Endothelial cell of umbilical vein (primary cell): ENCODE measurements at regions of chr4 and their contacts with region 1.

Region 1: DNA sequence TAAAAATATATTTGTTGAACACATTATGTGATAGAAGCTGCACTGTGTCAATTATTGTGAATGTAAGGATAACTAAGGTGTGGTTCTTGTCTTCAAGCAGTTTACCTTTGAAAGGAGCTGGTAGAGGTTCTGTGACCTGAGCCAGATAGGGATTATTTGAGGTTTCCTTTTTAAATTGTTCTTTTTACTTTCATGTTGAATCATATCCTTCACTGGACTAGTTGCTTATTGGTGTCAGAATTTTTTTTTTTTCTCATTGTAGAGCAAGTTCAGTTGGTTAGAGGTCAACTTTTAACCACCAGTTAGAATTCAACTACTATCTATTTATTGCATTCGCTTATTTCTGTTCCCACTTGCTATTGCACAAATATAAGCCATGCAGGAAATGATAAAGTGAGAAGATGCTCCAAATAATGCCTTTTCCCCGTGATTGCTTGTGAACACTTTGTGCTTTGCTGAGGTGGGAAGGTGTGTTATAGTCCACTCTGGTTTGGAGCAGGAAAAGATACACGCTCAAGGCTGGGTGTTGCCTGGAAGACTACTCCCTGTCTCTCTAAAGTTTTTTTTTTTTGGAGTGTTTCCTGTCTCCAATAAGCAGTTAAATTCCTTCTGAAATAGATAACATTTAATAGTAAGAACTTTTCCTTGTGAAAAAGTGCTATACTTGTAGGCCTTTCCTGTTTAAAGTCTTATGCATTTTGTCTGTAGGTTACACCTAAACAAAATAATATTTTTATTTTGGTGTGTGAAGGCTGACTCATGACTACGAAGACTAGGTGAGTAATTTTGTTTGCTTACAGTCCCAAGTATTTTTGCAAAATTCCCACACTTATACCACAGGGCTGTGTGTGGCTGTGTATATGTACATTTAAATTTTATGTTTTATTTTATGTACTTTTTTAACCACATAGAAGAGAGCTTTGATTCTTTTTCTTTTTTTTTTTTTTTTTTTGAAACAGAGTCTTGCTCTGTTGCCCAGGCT is 83.8 kb upstream of the LCORL start:
- DNase-seq: peak; percentile 57
- H3K4me3 ChIP-seq: no peak overlapping the region
- H3K27ac ChIP-seq: peak overlapping the region; percentile 46
- H3K4me1 ChIP-seq: peaks cover 36% of the 10 kb centered on the region
- H3K27me3 ChIP-seq: no peaks in the 10 kb centered on the region
- CTCF ChIP-seq: no peak
- POLR2A ChIP-seq: no peak

Region 2: GRCh38 chr4:18075823-18076433 is 29.4 kb before region 1 on chr4:
- CTCF ChIA-PET with region 1: interaction called, 5 read pairs
- POLR2A ChIA-PET with region 1: no interaction called
- dilution Hi-C with region 1: no loop called
- intact Hi-C with region 1: loop called (anchors 1 kb)
- DNase-seq: peak; percentile 47
- H3K4me3 ChIP-seq: no peak overlapping the region
- H3K27ac ChIP-seq: no peak overlapping the region
- H3K4me1 ChIP-seq: peaks cover 13% of the 10 kb centered on the region
- H3K27me3 ChIP-seq: peaks cover 4 to 8% of the 10 kb centered on the region in 2 experiments
- CTCF ChIP-seq: peak; percentile 60 to 62
- POLR2A ChIP-seq: no peak

Region 3: GRCh38 chr4:18318682-18319388 is 213.5 kb after region 1 on chr4:
- CTCF ChIA-PET with region 1: no interaction called
- POLR2A ChIA-PET with region 1: no interaction called
- dilution Hi-C with region 1: no loop called
- intact Hi-C with region 1: loop called (anchors 5 kb)
- DNase-seq: peak; percentile 91
- H3K4me3 ChIP-seq: peak overlapping the region in 2 of 3 experiments; percentile 2 to 25
- H3K27ac ChIP-seq: peak overlapping the region; percentile 16
- H3K4me1 ChIP-seq: peaks cover 9% of the 10 kb centered on the region
- H3K27me3 ChIP-seq: no peaks in the 10 kb centered on the region
- CTCF ChIP-seq: no peak
- POLR2A ChIP-seq: no peak

Region 4: GRCh38 chr4:18536428-18536827 is 431.1 kb after region 1 on chr4:
- CTCF ChIA-PET with region 1: no interaction called
- POLR2A ChIA-PET with region 1: no interaction called
- dilution Hi-C with region 1: no loop called
- intact Hi-C with region 1: loop called (anchors 1 kb)
- DNase-seq: peak; percentile 32
- H3K4me3 ChIP-seq: no peak overlapping the region
- H3K27ac ChIP-seq: no peak overlapping the region
- H3K4me1 ChIP-seq: peaks cover 45% of the 10 kb centered on the region
- H3K27me3 ChIP-seq: no peaks in the 10 kb centered on the region
- CTCF ChIP-seq: peak; percentile 16 to 37
- POLR2A ChIP-seq: no peak

Region 5: DNA sequence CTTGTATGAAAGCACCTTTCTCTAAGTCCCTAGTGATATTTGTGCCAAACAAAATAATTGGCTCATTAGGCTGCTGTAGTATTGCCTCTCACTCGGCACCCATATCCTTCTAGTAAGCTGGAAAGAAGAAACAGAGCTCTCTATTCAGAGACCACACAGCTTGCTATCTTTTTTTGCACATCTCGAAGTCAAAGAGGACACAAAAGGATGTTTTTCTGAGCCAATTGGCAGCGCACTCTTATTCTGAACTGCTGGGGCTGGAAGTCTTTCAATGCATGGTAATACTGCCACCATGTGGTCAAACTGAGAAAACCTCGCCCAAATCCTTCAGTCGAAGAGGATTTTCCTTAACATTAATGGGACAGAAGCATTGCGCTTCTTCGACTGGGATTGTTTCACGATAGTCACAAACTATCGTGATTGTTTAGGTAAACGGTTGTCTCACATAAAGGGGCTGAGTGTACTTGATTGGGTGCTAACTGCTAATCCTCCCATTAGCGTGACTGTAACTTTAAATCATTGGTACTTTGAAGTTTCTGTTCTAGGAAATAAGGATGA is 488.2 kb after region 1 on chr4:
- CTCF ChIA-PET with region 1: no interaction called
- POLR2A ChIA-PET with region 1: no interaction called
- dilution Hi-C with region 1: no loop called
- intact Hi-C with region 1: no loop called
- DNase-seq: peak; percentile 80
- H3K4me3 ChIP-seq: no peak overlapping the region
- H3K27ac ChIP-seq: no peak overlapping the region
- H3K4me1 ChIP-seq: no peaks in the 10 kb centered on the region
- H3K27me3 ChIP-seq: no peaks in the 10 kb centered on the region
- CTCF ChIP-seq: peak; percentile 70 to 73
- POLR2A ChIP-seq: no peak